ENCODE measurements at regions of chr1 and their contacts with region 1.

Region 1: GRCh38 chr1:246566128-246566812 is at the starts of genes CNST and TFB2M:
- DNase-seq: peak; percentile 74 to 96 (median 84)
- ATAC-seq: peak; percentile 65
- H3K4me3 ChIP-seq: peak within 1 kb of the TSS; percentile 92
- H3K4me3 Mint-ChIP-seq: peak within 1 kb of the TSS; percentile 97
- H3K27ac ChIP-seq: peak within 1 kb of the TSS; percentile 86 to 89
- H3K27ac Mint-ChIP-seq: peak within 1 kb of the TSS; percentile 96
- H3K4me1 ChIP-seq: peaks cover 38% of the 10 kb centered on the region
- H3K4me1 Mint-ChIP-seq: peaks cover 58% of the 10 kb centered on the region
- H3K27me3 ChIP-seq: no peaks in the 10 kb centered on the region
- H3K27me3 Mint-ChIP-seq: no peaks in the 10 kb centered on the region
- CTCF ChIP-seq: no peak
- total RNA-seq, gene CNST: 71.9 to 72.6 TPM
- total RNA-seq, gene TFB2M: 8.0 to 9.0 TPM

Region 2: GRCh38 chr1:246506674-246507481 is 59.4 kb before region 1 on chr1 and contains the start of gene SMYD3:
- CTCF ChIA-PET with region 1: interaction called, 3 read pairs
- POLR2A ChIA-PET with region 1: interaction called, 7 read pairs
- intact Hi-C with region 1: loop called (anchors 2 to 5 kb)
- DNase-seq: peak; percentile 57 to 93 (median 73)
- ATAC-seq: peak; percentile 85
- H3K4me3 ChIP-seq: peak within 1 kb of the TSS; percentile 81
- H3K4me3 Mint-ChIP-seq: peak within 1 kb of the TSS; percentile 94
- H3K27ac ChIP-seq: peak within 1 kb of the TSS in 1 of 2 donors; percentile 27
- H3K27ac Mint-ChIP-seq: peak within 1 kb of the TSS; percentile 90
- H3K4me1 ChIP-seq: peaks cover 20% of the 10 kb centered on the region
- H3K4me1 Mint-ChIP-seq: peaks cover 37% of the 10 kb centered on the region
- H3K27me3 ChIP-seq: no peaks in the 10 kb centered on the region
- H3K27me3 Mint-ChIP-seq: no peaks in the 10 kb centered on the region
- CTCF ChIP-seq: no peak
- total RNA-seq, gene SMYD3: 18.8 to 19.6 TPM

Region 3: DNA sequence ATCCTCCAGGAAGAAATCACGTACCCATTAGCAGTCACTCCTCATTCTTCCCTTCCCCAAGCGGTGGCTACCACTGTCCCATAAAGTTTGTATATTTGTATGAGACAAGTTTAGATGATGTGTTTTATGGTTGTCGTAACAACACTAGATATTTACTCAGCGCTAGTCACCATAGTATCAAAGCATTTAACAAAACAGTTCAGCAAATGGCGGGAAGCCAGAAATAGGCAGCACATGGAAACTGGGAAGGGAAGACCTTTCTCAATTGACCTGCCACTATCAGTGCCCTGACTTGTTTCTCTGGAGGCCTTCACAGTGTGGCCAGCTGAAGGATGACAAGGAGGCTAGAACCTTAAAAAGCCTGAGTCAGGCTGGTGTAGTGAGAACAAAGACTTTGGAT is 31.1 kb after region 1 on chr1:
- CTCF ChIA-PET with region 1: no interaction called
- POLR2A ChIA-PET with region 1: interaction called, 7 read pairs
- intact Hi-C with region 1: loop called (anchors 5 kb)
- DNase-seq: no peak
- ATAC-seq: peak; percentile 26
- H3K4me3 ChIP-seq: no peak overlapping the region
- H3K4me3 Mint-ChIP-seq: no peak overlapping the region
- H3K27ac ChIP-seq: no peak overlapping the region
- H3K27ac Mint-ChIP-seq: peak overlapping the region; percentile 66
- H3K4me1 ChIP-seq: peaks cover 32% of the 10 kb centered on the region
- H3K4me1 Mint-ChIP-seq: peaks cover 86% of the 10 kb centered on the region
- H3K27me3 ChIP-seq: no peaks in the 10 kb centered on the region
- H3K27me3 Mint-ChIP-seq: no peaks in the 10 kb centered on the region
- CTCF ChIP-seq: no peak

Region 4: DNA sequence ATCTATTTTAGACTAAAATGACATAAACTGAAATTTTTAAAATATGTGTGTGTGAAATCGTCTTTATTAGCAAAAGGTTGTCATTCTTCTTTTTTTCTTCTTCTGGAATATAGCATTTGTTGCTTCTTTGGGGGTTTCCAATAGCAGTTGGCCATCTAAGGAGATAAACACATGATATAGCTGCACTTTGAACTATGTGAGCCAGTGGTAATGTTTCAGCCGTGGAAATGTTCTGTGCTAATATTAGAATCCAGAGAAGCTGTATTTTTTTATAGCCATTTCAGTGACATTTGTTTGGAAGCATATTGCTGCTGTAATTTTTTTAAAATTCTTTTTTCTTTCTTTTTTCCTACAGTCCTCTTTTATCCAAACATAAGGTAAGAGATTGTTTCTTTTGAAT is 75.1 kb after region 1 on chr1:
- CTCF ChIA-PET with region 1: no interaction called
- POLR2A ChIA-PET with region 1: interaction called, 3 read pairs
- intact Hi-C with region 1: loop called (anchors 5 kb)
- DNase-seq: no peak
- ATAC-seq: no peak
- H3K4me3 ChIP-seq: no peak overlapping the region
- H3K4me3 Mint-ChIP-seq: no peak overlapping the region
- H3K27ac ChIP-seq: no peak overlapping the region
- H3K27ac Mint-ChIP-seq: no peak overlapping the region
- H3K4me1 ChIP-seq: peaks cover 11% of the 10 kb centered on the region
- H3K4me1 Mint-ChIP-seq: peaks cover 4% of the 10 kb centered on the region
- H3K27me3 ChIP-seq: no peaks in the 10 kb centered on the region
- H3K27me3 Mint-ChIP-seq: no peaks in the 10 kb centered on the region
- CTCF ChIP-seq: no peak

Region 5: DNA sequence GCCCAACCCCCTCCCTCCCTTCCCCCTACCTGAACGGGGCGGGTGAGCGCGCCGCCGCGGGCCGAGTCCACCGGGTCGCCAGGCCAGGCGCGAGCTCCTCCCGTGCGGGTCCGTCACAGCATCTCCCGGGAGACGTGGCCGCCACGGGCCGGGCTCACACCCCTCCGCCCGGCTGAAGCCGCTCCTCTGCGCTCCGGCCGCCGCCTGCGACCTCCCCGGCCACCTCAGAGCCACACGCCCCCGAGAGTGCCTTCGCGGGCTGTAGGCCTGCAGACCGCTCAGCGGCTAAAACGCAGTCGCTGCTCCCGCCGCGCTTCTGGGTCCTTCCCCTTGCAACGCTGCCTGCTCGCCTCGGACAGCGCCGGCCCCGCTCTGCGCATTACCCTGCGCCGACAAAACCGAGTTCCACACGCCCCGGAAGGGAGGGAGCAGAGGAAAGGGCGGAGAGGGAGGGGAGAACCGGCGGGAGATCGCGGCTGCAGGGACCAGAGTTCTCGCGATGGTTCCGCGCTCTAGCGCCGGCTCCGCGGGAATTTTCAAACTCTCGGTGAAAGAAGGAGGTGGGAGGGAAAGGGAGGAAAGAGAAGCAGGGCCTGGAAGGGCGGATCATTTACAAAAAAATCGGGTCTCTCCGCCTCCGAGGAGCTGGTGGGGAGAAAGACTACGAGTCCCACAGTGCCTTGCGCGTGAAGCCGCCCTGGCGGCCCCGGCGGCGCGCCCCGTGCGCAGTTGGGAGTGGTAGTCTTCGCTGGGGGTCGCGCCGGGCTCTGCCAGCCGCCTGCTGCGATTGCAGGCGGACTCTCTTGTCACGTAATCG is 365.5 kb after region 1 on chr1 and contains the start of gene AHCTF1:
- CTCF ChIA-PET with region 1: no interaction called
- POLR2A ChIA-PET with region 1: no interaction called
- intact Hi-C with region 1: loop called in 1 of 2 experiments (anchors 5 kb)
- DNase-seq: peak; percentile 89 to 98 (median 92)
- ATAC-seq: peak; percentile 90
- H3K4me3 ChIP-seq: peak within 1 kb of the TSS; percentile 94
- H3K4me3 Mint-ChIP-seq: peak within 1 kb of the TSS; percentile 99
- H3K27ac ChIP-seq: peak within 1 kb of the TSS; percentile 87 to 88
- H3K27ac Mint-ChIP-seq: peak within 1 kb of the TSS; percentile 96
- H3K4me1 ChIP-seq: peaks cover 20% of the 10 kb centered on the region
- H3K4me1 Mint-ChIP-seq: peaks cover 46% of the 10 kb centered on the region
- H3K27me3 ChIP-seq: no peaks in the 10 kb centered on the region
- H3K27me3 Mint-ChIP-seq: no peaks in the 10 kb centered on the region
- CTCF ChIP-seq: no peak
- total RNA-seq, gene AHCTF1: 65.6 to 68.8 TPM

Measured in CD4-positive, alpha-beta T cell (primary cell).